Upper lobe of right lung (tissue), 1 donor: ENCODE measurements at regions of chr12 and their contacts with region 1.

Region 1: GRCh38 chr12:107670999-107671643 is 14.5 kb upstream of the PWP1 start:
- DNase-seq: no peak
- ATAC-seq: peak; percentile 78
- H3K4me3 ChIP-seq: no peak overlapping the region
- H3K27ac ChIP-seq: no peak overlapping the region
- H3K4me1 ChIP-seq: no peaks in the 10 kb centered on the region
- H3K27me3 ChIP-seq: peaks cover 19% of the 10 kb centered on the region
- CTCF ChIP-seq: peak; percentile 50

Region 2: GRCh38 chr12:107718606-107719005 is 47.5 kb after region 1 on chr12:
- intact Hi-C with region 1: no loop called
- DNase-seq: no peak
- ATAC-seq: no peak
- H3K4me3 ChIP-seq: no peak overlapping the region
- H3K27ac ChIP-seq: no peak overlapping the region
- H3K4me1 ChIP-seq: no peaks in the 10 kb centered on the region
- H3K27me3 ChIP-seq: no peaks in the 10 kb centered on the region
- CTCF ChIP-seq: no peak

Region 3: GRCh38 chr12:107884769-107885694 is 213.9 kb after region 1 on chr12:
- intact Hi-C with region 1: loop called (anchors 10 kb)
- DNase-seq: peak; percentile 69
- ATAC-seq: peak; percentile 94
- H3K4me3 ChIP-seq: no peak overlapping the region
- H3K27ac ChIP-seq: no peak overlapping the region
- H3K4me1 ChIP-seq: no peaks in the 10 kb centered on the region
- H3K27me3 ChIP-seq: peaks cover 6% of the 10 kb centered on the region
- CTCF ChIP-seq: peak; percentile 69